Heart right ventricle (tissue), 16 donors: ENCODE measurements at regions of chr2 and their contacts with region 1.

Region 1: DNA sequence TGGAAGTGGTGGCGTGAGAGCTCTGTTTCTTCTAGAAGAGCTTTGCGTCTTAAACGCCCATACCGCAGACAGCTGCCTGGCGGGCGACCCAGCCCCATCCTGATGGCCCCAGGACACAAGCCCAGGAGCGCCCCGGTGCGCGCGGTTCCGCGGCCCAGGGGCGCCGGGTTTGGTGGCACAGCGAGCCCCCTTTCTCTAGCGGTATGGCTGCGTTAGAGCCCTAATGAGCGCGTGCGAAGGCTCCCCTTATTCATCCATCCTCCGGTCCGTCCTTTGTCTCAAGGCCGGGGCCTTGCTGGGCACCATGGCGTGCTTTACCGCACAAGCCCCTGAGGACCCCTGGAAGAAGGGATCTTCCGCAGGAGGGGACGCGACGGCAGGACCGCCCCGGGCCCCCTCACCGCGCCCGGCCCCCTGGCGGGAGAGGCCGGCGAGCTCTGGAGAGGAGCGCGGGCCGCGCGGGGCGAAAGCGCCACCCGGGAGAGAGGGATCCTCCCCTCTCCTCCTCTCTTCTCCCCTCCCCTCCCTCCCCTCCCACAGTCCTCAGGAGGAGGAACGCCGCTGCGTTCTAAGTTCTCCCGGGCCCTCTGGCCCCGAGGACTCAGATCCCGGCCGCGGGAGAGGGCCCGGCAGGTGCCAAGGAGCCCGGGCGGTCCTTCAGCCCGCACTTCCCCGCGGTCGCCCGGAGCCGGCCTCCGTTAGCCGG is 626 bp upstream of the SLC1A4 start:
- DNase-seq: peak; percentile 50 to 68
- ATAC-seq: peak; percentile 75 to 86 (median 78)
- H3K4me3 ChIP-seq: peak overlapping the region; percentile 52 to 98 (median 88)
- H3K27ac ChIP-seq: peak overlapping the region; percentile 83 to 100 (median 96)
- H3K4me1 ChIP-seq: peaks cover 2 to 51% (median 25%) of the 10 kb centered on the region in 9 donors
- H3K27me3 ChIP-seq: no peaks in the 10 kb centered on the region
- CTCF ChIP-seq: peak in 6 of 9 donors; percentile 36 to 77 (median 58)

Region 2: DNA sequence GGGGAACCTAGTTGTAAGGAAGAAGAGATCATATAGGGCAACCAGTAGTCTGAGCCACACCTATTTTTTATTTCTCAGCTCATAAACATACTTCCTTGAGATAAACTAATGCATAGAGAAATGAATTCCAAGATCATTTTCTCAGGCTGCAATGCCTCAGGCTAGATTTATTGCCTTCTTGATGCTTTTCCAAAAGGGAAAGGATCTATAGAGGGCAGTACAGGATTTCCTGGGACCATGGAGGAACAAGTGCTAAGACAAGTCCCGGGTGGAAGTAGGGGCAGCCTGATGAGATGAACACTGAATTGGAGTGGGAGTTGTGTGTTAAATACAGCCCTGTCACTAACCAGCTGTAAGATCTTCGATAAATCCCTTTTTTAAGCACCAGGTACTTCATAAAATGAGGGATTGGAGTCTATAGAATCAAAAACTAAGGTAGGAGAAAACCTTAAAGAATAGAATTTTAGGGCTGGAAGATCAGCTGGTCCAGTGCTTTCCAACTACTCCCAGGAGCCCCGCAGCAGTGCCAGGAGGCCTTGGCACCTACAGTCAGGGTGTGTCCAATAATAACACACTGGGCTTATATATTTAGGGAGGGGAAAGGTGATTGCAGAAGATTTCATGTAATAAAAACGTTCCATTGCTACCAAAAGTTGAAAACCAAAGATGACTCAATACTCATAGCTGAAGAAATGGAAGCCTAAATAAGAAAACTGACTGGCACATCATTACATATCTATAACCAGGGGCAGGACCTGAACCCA is 393.0 kb before region 1 on chr2:
- intact Hi-C with region 1: no loop called
- DNase-seq: no peak
- ATAC-seq: no peak
- H3K4me3 ChIP-seq: no peak overlapping the region
- H3K27ac ChIP-seq: no peak overlapping the region
- H3K4me1 ChIP-seq: peaks cover 0 to 26% (median 9%) of the 10 kb centered on the region in 9 donors
- H3K27me3 ChIP-seq: no peaks in the 10 kb centered on the region
- CTCF ChIP-seq: peak in 6 of 9 donors; percentile 7 to 52 (median 36)

Region 3: DNA sequence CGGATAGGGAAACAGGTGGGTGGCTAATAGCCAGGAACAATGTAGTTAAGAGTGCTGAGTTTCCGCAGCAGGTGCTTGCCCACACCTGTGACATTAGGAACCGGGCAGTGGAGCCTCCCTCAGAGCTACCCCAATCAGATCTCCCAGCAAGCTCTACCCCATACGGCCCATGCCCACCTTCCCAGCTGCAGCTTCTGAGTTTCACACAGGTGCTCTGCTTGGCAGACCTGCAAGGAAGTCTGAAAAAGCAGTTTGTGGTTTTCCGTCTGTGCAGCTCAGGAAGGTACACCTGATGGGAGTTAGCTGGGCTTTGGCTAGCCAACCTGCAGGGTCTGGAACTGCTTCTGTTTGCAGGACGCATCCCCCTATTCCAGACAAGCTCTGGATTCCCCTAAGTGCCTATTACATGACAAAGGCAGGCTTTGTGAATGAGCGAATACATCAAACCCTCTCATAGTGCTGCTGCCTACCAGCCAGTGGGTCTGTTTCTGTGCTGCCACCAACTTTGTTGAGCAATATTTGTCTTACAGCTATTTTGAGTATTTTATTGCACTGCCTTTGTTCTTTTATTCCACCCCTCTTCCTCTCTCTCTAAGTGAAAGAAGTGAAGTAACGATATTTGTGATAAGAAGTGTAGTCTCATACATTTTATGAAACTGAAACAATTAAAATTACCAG is 42.9 kb after region 1 on chr2:
- intact Hi-C with region 1: loop called in 2 of 10 experiments (anchors 5 kb)
- DNase-seq: no peak
- ATAC-seq: peak in 2 of 8 donors; percentile 18 to 19
- H3K4me3 ChIP-seq: no peak overlapping the region
- H3K27ac ChIP-seq: no peak overlapping the region
- H3K4me1 ChIP-seq: peaks cover 0 to 42% (median 17%) of the 10 kb centered on the region in 9 donors
- H3K27me3 ChIP-seq: no peaks in the 10 kb centered on the region
- CTCF ChIP-seq: no peak

Region 4: GRCh38 chr2:65040400-65041261 is 52.1 kb after region 1 on chr2:
- intact Hi-C with region 1: loop called in 4 of 10 experiments (anchors 2 to 5 kb)
- DNase-seq: peak; percentile 79 to 90
- ATAC-seq: peak; percentile 94 to 97 (median 95)
- H3K4me3 ChIP-seq: peak overlapping the region in 4 of 10 donors; percentile 11 to 28 (median 18)
- H3K27ac ChIP-seq: no peak overlapping the region
- H3K4me1 ChIP-seq: peaks cover 0 to 26% (median 15%) of the 10 kb centered on the region in 9 donors
- H3K27me3 ChIP-seq: no peaks in the 10 kb centered on the region
- CTCF ChIP-seq: peak; percentile 84 to 99 (median 96)